ENCODE measurements at regions of chr4 and their contacts with region 1.

Region 1: DNA sequence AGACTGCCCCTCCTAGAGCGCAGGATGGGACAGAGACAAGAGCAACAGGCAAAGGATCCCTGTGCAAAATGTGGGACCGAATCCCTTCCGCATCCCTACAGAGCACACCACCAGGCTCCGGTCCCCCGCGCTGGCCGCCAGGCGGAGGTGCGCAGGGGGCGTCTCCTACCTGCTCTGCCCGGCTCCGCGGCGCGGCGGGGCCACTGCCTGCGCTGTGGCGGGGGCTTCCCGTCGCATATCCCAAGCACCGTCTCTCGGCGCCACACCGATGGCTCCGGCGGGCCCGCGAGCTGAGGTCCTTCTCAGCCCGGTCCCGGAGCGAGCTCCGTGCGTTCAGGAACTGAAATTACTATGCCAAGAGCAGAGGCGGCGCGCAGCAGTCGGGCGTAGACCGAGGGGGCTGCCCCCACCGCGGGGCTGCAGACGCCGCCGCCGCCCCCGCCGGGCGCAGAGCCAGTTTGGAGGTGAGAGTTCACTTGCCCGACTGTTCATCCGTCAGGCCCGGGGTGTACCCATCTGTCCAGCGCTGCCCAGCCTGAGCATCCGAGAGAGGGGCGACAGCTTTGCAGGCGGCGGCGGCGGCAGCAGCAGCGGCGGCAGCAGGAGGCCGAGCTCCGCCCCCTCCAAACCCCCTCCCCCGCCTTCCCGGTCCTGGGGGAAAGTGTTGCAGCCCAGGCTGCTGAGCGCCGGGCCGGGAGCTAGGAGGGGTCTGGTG is at the start of gene GPRIN3:
- DNase-seq: peak; percentile 66 to 84 (median 66)
- ATAC-seq: peak; percentile 38 to 78 (median 68)
- H3K4me3 ChIP-seq: peak within 1 kb of the TSS; percentile 62 to 94 (median 80)
- H3K27ac ChIP-seq: peak within 1 kb of the TSS; percentile 70 to 92 (median 79)
- H3K4me1 ChIP-seq: peaks cover 0 to 47% (median 18%) of the 10 kb centered on the region in 12 donors
- H3K27me3 ChIP-seq: peaks cover 0 to 4% (median 0%) of the 10 kb centered on the region in 9 donors
- CTCF ChIP-seq: peak in 1 of 12 donors; percentile 9
- POLR2A ChIP-seq: no peak
- total RNA-seq, gene GPRIN3: 6.3 to 16.5 (median 13.8) TPM

Region 2: DNA sequence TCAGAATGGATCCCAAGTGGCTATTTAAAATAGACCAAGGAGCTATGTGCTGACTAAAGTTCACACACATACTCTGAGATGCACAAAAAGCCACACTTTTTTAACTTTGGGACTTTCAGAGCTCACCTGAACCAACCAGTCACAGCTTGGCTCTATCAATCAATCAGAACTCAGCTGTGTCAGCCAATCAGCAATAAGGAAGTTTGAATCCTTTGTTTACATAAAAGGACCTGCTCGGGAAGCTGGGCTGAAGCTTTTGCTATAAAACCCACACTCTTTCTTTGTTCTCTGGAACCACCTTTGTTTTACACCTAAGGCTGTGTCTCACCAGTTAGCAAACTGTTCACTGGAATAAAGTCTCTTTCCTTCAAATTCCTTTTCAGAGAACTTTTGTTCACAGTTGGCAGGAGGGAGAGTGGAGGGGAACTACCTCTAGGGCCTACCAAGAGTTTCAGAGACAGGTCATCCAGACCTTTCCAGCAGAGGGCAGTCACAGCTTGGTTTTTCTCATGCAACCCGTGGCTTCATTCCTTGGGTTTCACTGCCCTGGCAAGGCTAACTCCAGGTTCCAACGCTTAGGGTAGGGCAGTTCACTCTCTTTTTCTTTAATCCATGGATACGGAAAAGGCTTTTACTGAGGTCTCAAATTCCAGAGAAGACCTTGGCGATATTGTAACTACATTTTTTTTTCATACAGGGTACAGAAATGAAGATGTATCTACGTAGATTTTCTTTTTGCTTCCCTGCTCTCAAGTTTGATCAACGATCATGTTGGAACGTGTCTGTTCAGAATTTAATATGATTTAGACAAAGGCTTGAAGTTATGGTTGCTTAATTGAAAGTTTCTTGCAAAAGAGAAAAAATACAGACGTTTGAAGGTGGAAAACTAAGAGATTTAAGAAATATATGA is 80.7 kb before region 1 on chr4:
- intact Hi-C with region 1: loop called in 1 of 10 experiments (anchors 5 kb)
- DNase-seq: peak; percentile 70 to 83 (median 79)
- ATAC-seq: peak; percentile 90 to 99 (median 96)
- H3K4me3 ChIP-seq: no peak overlapping the region
- H3K27ac ChIP-seq: no peak overlapping the region
- H3K4me1 ChIP-seq: peaks cover 0 to 3% (median 0%) of the 10 kb centered on the region in 12 donors
- H3K27me3 ChIP-seq: no peaks in the 10 kb centered on the region
- CTCF ChIP-seq: peak; percentile 55 to 82 (median 72)
- POLR2A ChIP-seq: no peak

Region 3: DNA sequence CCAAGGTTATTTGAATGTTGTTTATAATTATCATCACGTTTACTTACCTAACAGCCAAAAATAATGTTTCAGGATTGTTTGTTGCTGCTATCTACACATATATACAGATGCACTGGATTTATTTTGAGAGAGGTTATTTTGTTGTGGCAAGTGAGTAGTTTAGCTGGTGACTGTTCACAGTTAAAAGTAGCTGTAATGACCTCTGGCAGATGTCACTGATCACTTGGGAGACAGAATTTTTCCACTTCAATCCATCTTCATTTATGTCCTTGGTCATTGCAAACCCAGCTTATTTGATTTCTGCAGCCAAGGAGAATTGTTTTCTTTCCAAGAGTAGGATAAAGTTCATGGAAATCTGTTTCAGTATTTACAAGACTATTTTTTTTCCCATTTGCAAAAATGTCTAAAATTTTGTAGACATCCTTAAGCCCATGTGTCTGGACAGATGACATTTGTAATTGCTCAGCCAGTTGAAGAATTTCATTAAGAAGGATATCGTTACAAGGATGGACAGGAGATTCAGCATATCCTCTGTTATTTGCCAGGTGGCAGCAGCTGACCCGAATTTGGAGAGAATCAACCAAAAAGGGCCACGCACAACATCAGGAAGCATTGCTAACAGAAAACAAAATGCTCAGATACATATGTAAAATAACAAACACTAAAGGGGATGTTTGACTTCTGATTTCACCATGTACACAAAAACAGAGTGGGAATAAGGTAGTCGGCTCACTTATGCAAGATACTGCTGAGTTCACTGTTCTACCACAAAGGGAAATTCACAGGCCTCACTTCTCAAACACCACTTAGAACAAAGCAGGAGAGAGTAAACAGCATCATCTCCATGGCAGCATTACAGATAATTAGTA is 64.5 kb before region 1 on chr4:
- intact Hi-C with region 1: loop called in 1 of 10 experiments (anchors 5 kb)
- DNase-seq: no peak
- ATAC-seq: peak; percentile 62 to 75 (median 68)
- H3K4me3 ChIP-seq: no peak overlapping the region
- H3K27ac ChIP-seq: peak overlapping the region in 8 of 12 donors; percentile 23 to 48 (median 40)
- H3K4me1 ChIP-seq: peaks cover 0 to 35% (median 20%) of the 10 kb centered on the region in 12 donors
- H3K27me3 ChIP-seq: no peaks in the 10 kb centered on the region
- CTCF ChIP-seq: peak in 3 of 12 donors; percentile 10 to 27 (median 22)
- POLR2A ChIP-seq: no peak

Region 4: DNA sequence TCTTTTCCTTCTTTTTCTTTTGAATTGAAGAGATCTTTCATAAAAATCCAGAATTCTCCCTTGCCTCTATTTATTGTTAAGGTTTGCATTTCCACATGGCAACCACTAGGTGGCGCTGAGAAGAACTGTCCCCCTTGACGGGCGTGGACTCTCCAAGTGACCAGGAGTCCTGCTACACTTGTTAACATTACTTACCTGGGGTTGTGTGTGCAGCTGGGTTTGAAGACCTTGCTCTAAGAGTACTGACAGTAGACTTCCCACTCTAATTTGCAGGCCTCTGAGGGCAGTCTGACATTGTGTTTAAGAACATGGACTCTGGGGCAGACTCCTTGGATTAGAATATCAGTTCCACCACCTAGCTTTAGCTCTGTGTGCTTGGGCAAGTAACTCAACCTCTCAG is 52.8 kb before region 1 on chr4:
- intact Hi-C with region 1: loop called in 6 of 10 experiments (anchors 5 to 10 kb)
- DNase-seq: no peak
- ATAC-seq: peak in 3 of 4 donors; percentile 25 to 47 (median 29)
- H3K4me3 ChIP-seq: no peak overlapping the region
- H3K27ac ChIP-seq: peak overlapping the region in 1 of 12 donors; percentile 8
- H3K4me1 ChIP-seq: peaks cover 0 to 56% (median 23%) of the 10 kb centered on the region in 12 donors
- H3K27me3 ChIP-seq: no peaks in the 10 kb centered on the region
- CTCF ChIP-seq: peak; percentile 51 to 80 (median 66)
- POLR2A ChIP-seq: no peak

Region 5: DNA sequence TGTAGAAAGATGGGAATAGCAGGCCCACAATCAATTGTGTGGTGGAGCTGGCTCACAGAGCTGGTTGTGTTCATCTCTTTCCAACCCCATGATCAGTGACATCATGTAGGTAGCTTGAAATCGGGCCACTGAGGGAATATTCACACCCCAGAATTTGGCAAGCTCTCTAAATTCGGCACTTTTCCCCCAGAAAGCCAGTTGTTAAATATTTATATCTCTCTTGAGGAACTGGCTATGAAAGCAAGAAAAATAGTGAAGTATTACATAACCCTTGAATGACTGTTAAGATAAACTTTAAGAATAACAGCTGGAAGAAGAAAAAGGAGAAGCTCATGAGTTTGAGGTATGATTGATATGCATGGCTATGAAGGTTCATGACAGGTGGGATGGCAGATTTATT is 38.9 kb before region 1 on chr4:
- intact Hi-C with region 1: no loop called
- DNase-seq: no peak
- ATAC-seq: peak in 2 of 4 donors; percentile 23 to 37
- H3K4me3 ChIP-seq: no peak overlapping the region
- H3K27ac ChIP-seq: peak overlapping the region in 6 of 12 donors; percentile 17 to 70 (median 41)
- H3K4me1 ChIP-seq: peaks cover 0 to 50% (median 17%) of the 10 kb centered on the region in 12 donors
- H3K27me3 ChIP-seq: no peaks in the 10 kb centered on the region
- CTCF ChIP-seq: no peak
- POLR2A ChIP-seq: no peak

Measured in heart left ventricle (tissue), 16 donors.